K562 (cell line): ENCODE measurements at regions of chr2 and their contacts with region 1.

Region 1: DNA sequence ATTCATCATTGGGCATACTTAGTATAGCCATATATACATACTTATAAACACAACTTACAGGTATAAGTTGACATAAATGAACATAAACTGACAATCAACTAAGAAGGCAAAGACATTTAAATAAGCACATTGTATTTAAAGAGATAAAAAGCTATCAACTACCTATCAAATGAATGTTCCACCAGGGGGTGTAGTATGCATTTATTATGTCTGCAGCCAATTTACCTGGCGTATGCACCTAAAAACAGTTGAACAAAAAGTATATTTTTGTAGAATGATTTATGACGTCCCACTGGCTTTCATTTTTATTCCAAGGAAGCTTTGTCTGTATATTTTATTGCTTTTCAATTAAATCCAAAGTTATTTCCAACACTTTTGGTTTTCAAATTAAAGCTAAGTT is 323.5 kb downstream of the AFF3 start:
- DNase-seq: no peak
- ATAC-seq: no peak
- H3K4me3 ChIP-seq: no peak overlapping the region
- H3K27ac ChIP-seq: no peak overlapping the region
- H3K4me1 ChIP-seq: no peaks in the 10 kb centered on the region
- H3K27me3 ChIP-seq: peaks cover 3 to 18% of the 10 kb centered on the region in 2 experiments; a peak in 4 of 5 replicates
- CTCF ChIP-seq: no peak
- EP300 ChIP-seq: no peak
- POLR2A ChIP-seq: no peak
- RAD21 ChIP-seq: peak in 1 of 2 experiments; percentile 29; a peak in 2 of 4 replicates

Region 2: GRCh38 chr2:99725820-99726219 is 93.0 kb before region 1 on chr2:
- CTCF ChIA-PET with region 1: no interaction called
- POLR2A ChIA-PET with region 1: no interaction called
- in situ Hi-C with region 1: no loop called
- intact Hi-C with region 1: loop called (anchors 2 kb)
- DNase-seq: no peak
- ATAC-seq: no peak
- H3K4me3 ChIP-seq: no peak overlapping the region
- H3K27ac ChIP-seq: no peak overlapping the region
- H3K4me1 ChIP-seq: no peaks in the 10 kb centered on the region
- H3K27me3 ChIP-seq: no peaks in the 10 kb centered on the region; a peak in 1 of 5 replicates
- CTCF ChIP-seq: peak in 1 of 3 experiments; percentile 44; a peak in 3 of 6 replicates
- EP300 ChIP-seq: no peak
- POLR2A ChIP-seq: no peak
- RAD21 ChIP-seq: peak; percentile 65 to 78